Activated CD4-positive, alpha-beta memory T cell treated with anti-CD3 and anti-CD28 coated beads, Interleukin-2, amount 10 ng/mL, durations not matched to agents 7 days and 5 days (primary cell): ENCODE measurements at regions of chr12 and their contacts with region 1.

Region 1: GRCh38 chr12:46268590-46269558 is at the start of gene SLC38A1:
- DNase-seq: peak; percentile 92
- H3K4me3 Mint-ChIP-seq: no peak within 1 kb of the TSS
- H3K27ac Mint-ChIP-seq: no peak within 1 kb of the TSS
- H3K4me1 Mint-ChIP-seq: peaks cover 28% of the 10 kb centered on the region
- H3K27me3 Mint-ChIP-seq: no peaks in the 10 kb centered on the region
- total RNA-seq, gene SLC38A1: 209 to 214 TPM

Region 2: DNA sequence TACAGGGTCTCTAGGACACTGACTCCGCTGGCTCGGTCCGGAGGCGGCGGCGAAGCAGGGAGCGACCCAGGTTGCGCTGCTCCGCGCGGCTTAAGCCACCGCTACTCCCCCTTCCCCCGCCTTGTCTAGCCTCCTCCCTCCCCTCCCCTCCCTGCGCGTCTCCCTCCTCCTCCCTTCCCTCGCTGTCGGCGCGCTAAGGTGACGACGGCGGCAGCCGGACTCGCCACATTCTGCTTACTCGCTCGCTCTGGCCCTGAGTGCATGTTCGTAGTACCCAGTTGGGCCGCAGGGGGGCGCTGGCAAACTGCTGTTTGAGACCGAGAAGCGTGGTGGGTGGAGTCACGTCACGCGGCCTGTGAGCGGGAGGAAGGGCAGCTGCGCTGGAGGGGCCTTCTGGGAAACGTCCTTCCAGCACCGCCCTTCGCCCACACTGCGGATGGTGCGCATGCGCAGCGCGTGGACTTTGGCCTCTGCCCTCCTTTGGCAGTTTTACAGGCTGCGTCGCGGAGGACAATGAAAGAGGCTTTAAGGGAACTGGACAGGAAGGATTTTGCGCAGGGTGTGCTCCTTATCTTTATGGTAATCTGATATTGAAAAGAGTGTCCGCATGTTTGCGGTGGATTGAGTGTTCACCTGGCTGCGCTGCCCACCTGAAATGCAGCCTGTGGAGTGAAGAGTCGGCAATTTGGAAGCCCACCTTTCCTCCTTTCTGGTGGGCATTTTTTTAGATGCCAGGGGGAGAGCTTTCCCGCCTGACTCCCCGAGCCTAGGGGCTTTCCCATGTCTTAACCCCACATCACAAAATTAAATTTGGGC is 278.2 kb before region 1 on chr12 and contains the start of gene SCAF11:
- CTCF ChIA-PET with region 1: interaction called, 12 read pairs
- POLR2A ChIA-PET with region 1: interaction called, 52 read pairs
- DNase-seq: peak; percentile 100
- H3K4me3 Mint-ChIP-seq: peak within 1 kb of the TSS; percentile 95
- H3K27ac Mint-ChIP-seq: peak within 1 kb of the TSS; percentile 97
- H3K4me1 Mint-ChIP-seq: peaks cover 46% of the 10 kb centered on the region
- H3K27me3 Mint-ChIP-seq: no peaks in the 10 kb centered on the region
- total RNA-seq, gene SCAF11: 129 to 136 TPM

Region 3: DNA sequence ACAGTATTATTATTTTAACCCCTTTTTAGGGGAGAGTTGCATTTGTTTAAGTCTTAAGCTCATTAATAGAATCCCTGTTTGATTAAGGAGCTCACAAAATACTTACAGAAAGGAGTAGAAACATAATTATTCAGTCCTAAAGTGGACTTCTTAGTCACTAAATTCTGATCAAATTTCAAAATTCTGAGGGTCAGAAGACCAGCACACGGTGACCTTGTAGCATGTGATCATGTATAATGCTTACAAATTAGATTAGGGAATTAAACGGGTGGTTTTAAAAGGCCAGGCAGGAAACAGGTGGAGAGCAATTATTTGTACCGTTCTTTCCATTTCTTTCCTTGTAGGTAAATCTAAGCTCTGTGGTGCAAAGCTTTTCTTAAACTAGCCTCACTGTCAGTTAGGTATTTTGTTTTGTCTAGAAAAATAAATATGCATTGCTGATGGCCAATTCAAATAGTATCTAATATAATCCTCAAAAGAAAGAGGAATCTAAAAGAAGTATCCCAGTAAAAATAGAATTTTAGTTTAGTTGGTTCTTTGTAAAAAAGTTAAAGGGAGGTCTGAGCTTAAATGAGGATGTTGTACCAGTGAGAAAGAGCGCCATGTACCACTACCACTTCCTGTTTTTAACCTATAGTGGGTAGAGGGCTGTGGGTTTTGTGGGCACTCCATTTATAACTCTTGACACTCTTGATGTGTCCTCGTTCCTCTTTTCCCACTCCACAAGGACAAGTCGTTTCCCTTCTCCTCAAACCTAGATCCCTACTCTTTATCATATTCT is 51.1 kb before region 1 on chr12:
- CTCF ChIA-PET with region 1: interaction called, 40 read pairs
- POLR2A ChIA-PET with region 1: interaction called, 449 read pairs
- DNase-seq: peak; percentile 81
- H3K4me3 Mint-ChIP-seq: peak overlapping the region; percentile 73
- H3K27ac Mint-ChIP-seq: peak overlapping the region; percentile 95
- H3K4me1 Mint-ChIP-seq: peaks cover 94% of the 10 kb centered on the region
- H3K27me3 Mint-ChIP-seq: no peaks in the 10 kb centered on the region

Region 4: DNA sequence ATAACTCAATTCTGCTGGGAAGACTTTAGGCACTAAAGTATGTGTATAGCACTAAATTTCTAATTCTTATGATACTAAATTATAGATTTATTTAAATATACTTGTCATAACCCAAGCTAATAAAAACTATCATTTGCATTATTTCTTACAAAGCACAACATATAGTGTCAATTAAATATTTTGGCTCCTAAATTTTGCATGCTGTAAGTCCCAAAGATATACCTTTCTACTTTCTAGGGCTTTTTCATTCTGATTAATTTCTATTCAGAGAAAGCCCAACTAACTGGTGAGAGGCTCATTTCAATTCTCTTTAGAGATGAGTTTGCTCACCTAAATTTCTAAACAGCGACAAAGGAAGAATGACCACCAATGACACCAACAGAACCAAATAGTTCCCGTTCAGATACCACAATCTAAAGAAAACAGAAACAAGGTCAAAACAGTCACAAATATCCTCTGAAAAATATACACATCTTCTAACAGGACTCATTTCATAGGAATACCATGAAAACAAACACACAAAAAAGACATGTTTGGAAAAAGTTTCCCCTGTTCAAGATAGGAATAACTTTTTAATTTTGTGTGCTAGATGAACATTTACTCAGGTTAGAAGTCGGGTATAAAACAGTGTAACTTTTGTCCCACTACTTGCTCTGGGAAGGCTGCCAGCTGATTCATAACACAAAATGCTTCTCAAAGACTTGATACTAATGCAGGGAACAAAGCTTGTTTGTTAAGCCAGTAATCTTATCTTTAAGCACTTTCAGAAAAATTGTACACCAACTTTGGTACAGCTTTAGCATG is 96.1 kb after region 1 on chr12:
- CTCF ChIA-PET with region 1: no interaction called
- POLR2A ChIA-PET with region 1: interaction called, 101 read pairs
- DNase-seq: no peak
- H3K4me3 Mint-ChIP-seq: no peak overlapping the region
- H3K27ac Mint-ChIP-seq: no peak overlapping the region
- H3K4me1 Mint-ChIP-seq: peaks cover 86% of the 10 kb centered on the region
- H3K27me3 Mint-ChIP-seq: no peaks in the 10 kb centered on the region

Region 5: GRCh38 chr12:46382964-46383653 is 114.2 kb after region 1 on chr12:
- CTCF ChIA-PET with region 1: no interaction called
- POLR2A ChIA-PET with region 1: interaction called, 19 read pairs
- DNase-seq: peak; percentile 95
- H3K4me3 Mint-ChIP-seq: peak overlapping the region; percentile 82
- H3K27ac Mint-ChIP-seq: peak overlapping the region; percentile 90
- H3K4me1 Mint-ChIP-seq: peaks cover 38% of the 10 kb centered on the region
- H3K27me3 Mint-ChIP-seq: no peaks in the 10 kb centered on the region

Region 6: DNA sequence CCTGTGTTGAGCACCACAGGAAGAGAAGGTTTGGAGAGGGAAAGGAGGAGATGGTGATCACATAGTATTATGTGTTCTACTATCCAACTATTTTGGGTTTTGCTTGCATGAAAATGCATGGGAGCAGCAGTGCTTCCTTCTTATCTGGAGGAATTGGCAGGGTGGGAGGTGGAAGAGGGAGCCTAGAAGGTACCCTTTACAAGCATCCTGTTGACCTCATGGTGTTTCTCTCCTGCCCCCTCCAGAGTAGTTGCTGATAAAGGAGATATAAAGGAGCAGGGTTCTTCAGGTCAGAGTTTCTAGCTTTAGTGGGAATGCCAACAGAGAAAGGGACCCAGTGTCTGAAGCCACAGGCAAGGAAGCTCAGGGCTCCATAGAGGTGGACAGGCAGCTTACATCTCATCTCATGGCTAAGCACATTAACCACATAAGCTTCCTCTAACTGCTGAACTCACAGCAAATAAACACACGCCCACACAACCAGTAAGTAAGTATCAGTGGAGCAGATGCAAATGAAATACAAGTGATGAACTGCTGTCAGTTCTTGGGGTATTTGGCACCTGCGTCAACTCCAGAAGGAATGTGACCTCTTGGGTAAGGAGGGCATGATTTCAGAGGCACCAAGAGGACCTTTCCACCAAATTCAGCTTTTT is 277.9 kb after region 1 on chr12:
- CTCF ChIA-PET with region 1: no interaction called
- POLR2A ChIA-PET with region 1: interaction called, 10 read pairs
- DNase-seq: peak; percentile 29
- H3K4me3 Mint-ChIP-seq: no peak overlapping the region
- H3K27ac Mint-ChIP-seq: peak overlapping the region; percentile 81
- H3K4me1 Mint-ChIP-seq: peaks cover 59% of the 10 kb centered on the region
- H3K27me3 Mint-ChIP-seq: no peaks in the 10 kb centered on the region